T-cell (primary cell): ENCODE measurements at regions of chr16 and their contacts with region 1.

Region 1: DNA sequence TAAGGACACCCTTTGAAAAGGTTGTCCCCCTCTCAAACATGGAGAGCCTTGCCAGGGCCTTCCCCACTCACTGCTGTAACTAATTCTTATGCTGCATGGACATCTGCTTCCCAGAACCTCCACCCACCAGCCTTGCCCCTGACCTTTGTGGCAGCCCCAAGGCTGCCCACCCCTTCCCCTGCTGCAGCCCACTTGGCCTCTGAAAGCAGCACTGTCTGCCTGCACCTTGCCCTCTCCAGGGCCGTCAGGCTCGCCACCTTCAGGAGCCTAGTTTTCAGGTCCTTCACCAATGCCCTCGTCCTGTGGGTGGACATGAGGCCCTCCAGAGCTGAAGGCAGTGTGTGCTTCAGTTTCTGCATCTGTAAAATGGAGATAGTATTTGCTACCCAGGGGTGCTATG is 2.7 kb upstream of the CORO1A start:
- DNase-seq: no peak
- ATAC-seq: no peak
- H3K4me3 ChIP-seq: no peak overlapping the region
- H3K4me3 Mint-ChIP-seq: no peak overlapping the region
- H3K27ac ChIP-seq: no peak overlapping the region
- H3K27ac Mint-ChIP-seq: peak overlapping the region; percentile 33 to 78
- H3K4me1 ChIP-seq: peaks cover 2 to 28% of the 10 kb centered on the region in 2 experiments
- H3K4me1 Mint-ChIP-seq: peaks cover 10 to 22% (median 16%) of the 10 kb centered on the region in 3 donors
- H3K27me3 ChIP-seq: no peaks in the 10 kb centered on the region
- H3K27me3 Mint-ChIP-seq: no peaks in the 10 kb centered on the region

Region 2: GRCh38 chr16:30115238-30115637 is 65.5 kb before region 1 on chr16:
- CTCF ChIA-PET with region 1: interaction called in 1 of 2 experiments, 10 read pairs
- POLR2A ChIA-PET with region 1: no interaction called
- DNase-seq: peak in 4 of 35 experiments; percentile 25 to 34 (median 28)
- ATAC-seq: peak in 3 of 4 experiments; percentile 40 to 64 (median 48)
- H3K4me3 ChIP-seq: no peak overlapping the region
- H3K4me3 Mint-ChIP-seq: peak overlapping the region in 1 of 3 donors; percentile 28
- H3K27ac ChIP-seq: peak overlapping the region; percentile 55
- H3K27ac Mint-ChIP-seq: peak overlapping the region; percentile 79 to 84
- H3K4me1 ChIP-seq: peaks cover under 1 to 40% of the 10 kb centered on the region in 2 experiments
- H3K4me1 Mint-ChIP-seq: peaks cover 19 to 36% (median 26%) of the 10 kb centered on the region in 3 donors
- H3K27me3 ChIP-seq: no peaks in the 10 kb centered on the region
- H3K27me3 Mint-ChIP-seq: no peaks in the 10 kb centered on the region

Region 3: DNA sequence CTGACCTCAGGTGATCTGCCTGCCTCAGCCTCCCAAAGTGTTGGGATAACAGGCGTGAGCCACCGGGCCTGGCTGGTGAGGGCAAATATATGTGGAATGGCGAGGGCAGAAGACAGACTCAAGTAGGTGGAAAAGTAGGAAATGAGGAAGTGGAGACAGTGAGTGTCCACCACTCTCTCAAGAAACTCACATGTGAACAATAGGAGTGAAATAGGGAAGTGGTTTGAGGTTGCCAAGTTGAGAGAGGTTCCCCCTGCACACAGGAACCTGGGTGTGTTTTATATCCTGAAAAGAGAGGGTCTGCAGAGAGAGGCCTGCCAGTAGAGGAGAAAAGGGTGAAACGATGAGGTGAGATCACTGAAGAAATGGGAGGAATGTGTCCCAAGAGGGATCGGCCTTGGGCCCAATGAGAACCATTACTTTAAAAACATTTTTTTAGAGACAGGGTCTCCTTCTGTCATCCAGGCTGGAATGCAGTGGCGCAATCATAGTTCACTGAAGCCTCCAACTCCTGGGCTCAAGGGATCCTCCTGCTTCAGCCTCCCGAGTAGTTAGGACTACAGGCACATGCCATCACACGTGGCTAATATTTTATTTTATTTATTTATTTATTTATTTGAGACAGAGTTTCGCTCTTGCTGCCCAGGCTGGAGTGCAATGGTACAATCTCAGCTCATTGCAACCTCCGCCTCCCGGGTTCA is 14.4 kb before region 1 on chr16:
- CTCF ChIA-PET with region 1: no interaction called
- POLR2A ChIA-PET with region 1: no interaction called
- DNase-seq: peak in 4 of 35 experiments; percentile 7 to 32 (median 20)
- ATAC-seq: peak; percentile 57 to 88 (median 68)
- H3K4me3 ChIP-seq: peak overlapping the region in 1 of 2 donors; percentile 32
- H3K4me3 Mint-ChIP-seq: peak overlapping the region in 2 of 3 donors; percentile 10 to 66
- H3K27ac ChIP-seq: no peak overlapping the region
- H3K27ac Mint-ChIP-seq: peak overlapping the region; percentile 65 to 86
- H3K4me1 ChIP-seq: peaks cover 7 to 38% of the 10 kb centered on the region in 2 experiments
- H3K4me1 Mint-ChIP-seq: peaks cover 25 to 38% (median 34%) of the 10 kb centered on the region in 3 donors
- H3K27me3 ChIP-seq: no peaks in the 10 kb centered on the region
- H3K27me3 Mint-ChIP-seq: no peaks in the 10 kb centered on the region